ENCODE measurements at regions of chr22 and their contacts with region 1.

Region 1: DNA sequence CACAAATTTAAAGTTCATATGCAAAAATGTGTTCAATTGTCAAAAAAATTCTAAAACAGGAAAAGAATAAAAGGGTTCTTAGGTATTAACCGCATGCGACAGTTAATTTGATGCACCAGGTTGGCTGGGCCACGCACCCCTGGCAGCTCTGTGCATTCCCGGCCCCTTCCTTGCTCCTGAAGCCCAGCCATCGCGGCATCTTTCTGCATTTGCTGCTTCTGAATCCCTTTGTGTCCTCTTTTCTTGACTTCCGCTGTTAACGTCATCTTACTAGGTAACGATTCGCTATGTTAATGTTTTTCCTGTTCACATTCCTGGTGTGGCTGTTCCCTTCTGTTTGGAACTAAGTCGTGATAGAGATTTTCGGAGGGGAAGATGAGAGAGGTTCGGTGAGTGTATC is 7.9 kb upstream of the KLHDC7B start:
- DNase-seq: no peak
- H3K4me3 Mint-ChIP-seq: no peak overlapping the region
- H3K27ac Mint-ChIP-seq: peak overlapping the region; percentile 85
- H3K4me1 Mint-ChIP-seq: peaks cover 40% of the 10 kb centered on the region
- H3K27me3 Mint-ChIP-seq: no peaks in the 10 kb centered on the region
- CTCF ChIP-seq: no peak

Region 2: GRCh38 chr22:50341977-50342650 is 195.7 kb before region 1 on chr22:
- CTCF ChIA-PET with region 1: no interaction called
- POLR2A ChIA-PET with region 1: no interaction called
- intact Hi-C with region 1: no loop called
- DNase-seq: peak; percentile 90
- H3K4me3 Mint-ChIP-seq: peak overlapping the region; percentile 69
- H3K27ac Mint-ChIP-seq: no peak overlapping the region
- H3K4me1 Mint-ChIP-seq: no peaks in the 10 kb centered on the region
- H3K27me3 Mint-ChIP-seq: no peaks in the 10 kb centered on the region
- CTCF ChIP-seq: peak; percentile 92

Region 3: GRCh38 chr22:50500452-50500851 is 37.3 kb before region 1 on chr22:
- CTCF ChIA-PET with region 1: no interaction called
- POLR2A ChIA-PET with region 1: no interaction called
- intact Hi-C with region 1: no loop called
- DNase-seq: no peak
- H3K4me3 Mint-ChIP-seq: no peak overlapping the region
- H3K27ac Mint-ChIP-seq: no peak overlapping the region
- H3K4me1 Mint-ChIP-seq: peaks cover 7% of the 10 kb centered on the region
- H3K27me3 Mint-ChIP-seq: no peaks in the 10 kb centered on the region
- CTCF ChIP-seq: no peak

Region 4: GRCh38 chr22:50556703-50557102 is 18.9 kb after region 1 on chr22:
- CTCF ChIA-PET with region 1: interaction called, 4 read pairs
- POLR2A ChIA-PET with region 1: interaction called, 13 read pairs
- intact Hi-C with region 1: no loop called
- DNase-seq: no peak
- H3K4me3 Mint-ChIP-seq: no peak overlapping the region
- H3K27ac Mint-ChIP-seq: no peak overlapping the region
- H3K4me1 Mint-ChIP-seq: peaks cover 14% of the 10 kb centered on the region
- H3K27me3 Mint-ChIP-seq: no peaks in the 10 kb centered on the region
- CTCF ChIP-seq: no peak